Common myeloid progenitor, CD34-positive (primary cell): ENCODE measurements at regions of chr7 and their contacts with region 1.

Region 1: GRCh38 chr7:155729834-155730233 is 82.4 kb downstream of the SHH start:
- DNase-seq: peak in 1 of 3 donors; percentile 4
- H3K4me3 ChIP-seq: no peak overlapping the region
- H3K27ac ChIP-seq: no peak overlapping the region
- H3K4me1 ChIP-seq: peaks cover 0 to 20% (median 9%) of the 10 kb centered on the region in 4 experiments
- H3K27me3 ChIP-seq: no peaks in the 10 kb centered on the region

Region 2: DNA sequence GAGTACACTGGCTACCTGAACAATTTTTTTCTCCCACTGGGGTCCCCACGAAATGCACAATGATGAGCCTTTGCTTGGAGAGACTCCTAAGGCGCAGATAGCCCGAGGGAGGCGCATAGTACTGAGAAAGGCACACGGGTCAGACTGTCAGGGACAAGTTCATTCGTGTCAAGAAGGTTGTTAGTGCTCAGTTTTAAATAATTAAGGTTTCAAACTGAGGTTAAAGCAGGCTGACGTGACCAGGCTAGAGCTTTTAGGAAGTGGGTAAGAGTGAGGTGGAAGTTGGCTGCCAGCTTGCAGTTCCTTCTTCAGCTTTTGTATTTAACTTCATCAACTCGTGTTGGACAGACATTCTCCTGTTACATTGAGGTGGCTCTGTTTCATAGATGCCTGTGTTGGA is 53.8 kb before region 1 on chr7:
- CTCF ChIA-PET with region 1: no interaction called
- POLR2A ChIA-PET with region 1: no interaction called
- DNase-seq: peak in 2 of 3 donors; percentile 70 to 84
- H3K4me3 ChIP-seq: peak overlapping the region in 1 of 7 experiments; percentile 36
- H3K27ac ChIP-seq: peak overlapping the region; percentile 35 to 63
- H3K4me1 ChIP-seq: peaks cover 3 to 19% (median 12%) of the 10 kb centered on the region in 4 experiments
- H3K27me3 ChIP-seq: no peaks in the 10 kb centered on the region

Region 3: GRCh38 chr7:155769701-155770100 is 39.9 kb after region 1 on chr7:
- CTCF ChIA-PET with region 1: interaction called, 13 read pairs
- POLR2A ChIA-PET with region 1: no interaction called
- DNase-seq: no peak
- H3K4me3 ChIP-seq: no peak overlapping the region
- H3K27ac ChIP-seq: no peak overlapping the region
- H3K4me1 ChIP-seq: peaks cover 0 to 12% (median 3%) of the 10 kb centered on the region in 4 experiments
- H3K27me3 ChIP-seq: no peaks in the 10 kb centered on the region